ENCODE measurements at regions of chr20 and their contacts with region 1.

Region 1: DNA sequence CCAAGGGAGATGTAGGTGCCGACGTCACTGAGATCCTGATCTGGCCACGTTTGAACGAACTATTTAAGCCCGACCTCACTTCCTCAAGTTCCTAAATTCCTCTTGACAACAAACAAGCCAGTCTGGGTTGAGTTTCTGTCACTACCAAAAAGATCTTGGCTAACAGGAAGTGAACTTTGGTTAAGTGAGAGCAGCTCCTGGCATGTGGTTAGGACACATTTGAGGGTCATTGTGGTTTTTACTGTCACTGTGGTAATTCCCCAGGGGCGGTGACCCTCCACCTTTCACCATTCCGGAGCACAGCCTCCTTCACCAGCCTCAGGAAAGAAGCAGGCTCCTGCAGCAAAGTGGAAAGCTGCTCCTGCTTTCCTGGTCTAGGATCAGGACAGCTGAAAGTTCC is 43.1 kb upstream of the ZNF831 start:
- DNase-seq: peak; percentile 65
- H3K4me3 Mint-ChIP-seq: no peak overlapping the region
- H3K27ac Mint-ChIP-seq: peak overlapping the region; percentile 94
- H3K4me1 Mint-ChIP-seq: peaks cover 71% of the 10 kb centered on the region
- H3K27me3 Mint-ChIP-seq: no peaks in the 10 kb centered on the region

Region 2: GRCh38 chr20:59102841-59103299 is 17.6 kb before region 1 on chr20:
- CTCF ChIA-PET with region 1: interaction called, 8 read pairs
- POLR2A ChIA-PET with region 1: interaction called, 7 read pairs
- intact Hi-C with region 1: loop called (anchors 2 kb)
- DNase-seq: no peak
- H3K4me3 Mint-ChIP-seq: no peak overlapping the region
- H3K27ac Mint-ChIP-seq: peak overlapping the region; percentile 18
- H3K4me1 Mint-ChIP-seq: peaks cover 13% of the 10 kb centered on the region
- H3K27me3 Mint-ChIP-seq: no peaks in the 10 kb centered on the region

Measured in activated CD4-positive, alpha-beta memory T cell treated with anti-CD3 and anti-CD28 coated beads for 36 hours (primary cell).